GM12878 (cell line): ENCODE measurements at regions of chr2 and their contacts with region 1.

Region 1: GRCh38 chr2:143110758-143111428 is 18.3 kb upstream of the ARHGAP15 start:
- DNase-seq: peak; percentile 62
- ATAC-seq: peak; percentile 98
- H3K4me3 ChIP-seq: no peak overlapping the region
- H3K27ac ChIP-seq: no peak overlapping the region
- H3K4me1 ChIP-seq: no peaks in the 10 kb centered on the region
- H3K27me3 ChIP-seq: no peaks in the 10 kb centered on the region
- CTCF ChIP-seq: peak; percentile 55 to 79 (median 67)
- EP300 ChIP-seq: no peak
- POLR2A ChIP-seq: no peak
- RAD21 ChIP-seq: peak; percentile 97

Region 2: GRCh38 chr2:143034292-143035074 is 76.4 kb before region 1 on chr2:
- CTCF ChIA-PET with region 1: interaction called, 18 read pairs
- POLR2A ChIA-PET with region 1: no interaction called
- RAD21 ChIA-PET with region 1: interaction called, 4 read pairs
- SMC1A ChIA-PET with region 1: interaction called, 4 read pairs
- in situ Hi-C with region 1: no loop called
- intact Hi-C with region 1: loop called (anchors 2 kb)
- DNase-seq: peak; percentile 53
- ATAC-seq: peak; percentile 86
- H3K4me3 ChIP-seq: no peak overlapping the region
- H3K27ac ChIP-seq: no peak overlapping the region
- H3K4me1 ChIP-seq: no peaks in the 10 kb centered on the region
- H3K27me3 ChIP-seq: no peaks in the 10 kb centered on the region
- CTCF ChIP-seq: peak; percentile 78 to 98 (median 93); a peak in 5 of 6 replicates
- EP300 ChIP-seq: no peak
- POLR2A ChIP-seq: no peak
- RAD21 ChIP-seq: peak; percentile 78

Region 3: DNA sequence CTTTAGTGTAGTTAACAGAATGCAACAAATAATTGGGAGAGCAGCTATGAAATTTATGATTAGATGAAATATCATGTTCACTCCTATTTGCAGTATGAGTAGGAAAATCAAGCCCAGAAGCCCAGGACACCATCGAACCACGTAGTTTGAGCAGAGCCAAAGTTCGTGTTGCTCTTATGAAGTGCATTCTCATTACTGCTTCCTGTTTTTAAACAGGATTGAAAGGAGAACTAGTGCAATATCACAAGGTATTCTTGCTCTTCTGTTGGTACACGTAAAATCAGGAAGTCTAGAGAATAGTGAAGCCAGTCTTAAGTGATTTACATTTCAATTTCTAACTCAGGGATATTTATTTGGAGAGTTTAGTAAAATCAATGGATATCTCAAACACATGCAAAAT is 39.4 kb after region 1 on chr2:
- CTCF ChIA-PET with region 1: interaction called, 33 read pairs
- POLR2A ChIA-PET with region 1: no interaction called
- RAD21 ChIA-PET with region 1: interaction called, 15 read pairs
- SMC1A ChIA-PET with region 1: interaction called, 92 read pairs
- in situ Hi-C with region 1: no loop called
- intact Hi-C with region 1: no loop called
- DNase-seq: no peak
- ATAC-seq: peak; percentile 67
- H3K4me3 ChIP-seq: no peak overlapping the region
- H3K27ac ChIP-seq: peak overlapping the region; percentile 48
- H3K4me1 ChIP-seq: peaks cover 33% of the 10 kb centered on the region
- H3K27me3 ChIP-seq: no peaks in the 10 kb centered on the region
- CTCF ChIP-seq: no peak
- EP300 ChIP-seq: no peak
- POLR2A ChIP-seq: no peak
- RAD21 ChIP-seq: no peak

Region 4: DNA sequence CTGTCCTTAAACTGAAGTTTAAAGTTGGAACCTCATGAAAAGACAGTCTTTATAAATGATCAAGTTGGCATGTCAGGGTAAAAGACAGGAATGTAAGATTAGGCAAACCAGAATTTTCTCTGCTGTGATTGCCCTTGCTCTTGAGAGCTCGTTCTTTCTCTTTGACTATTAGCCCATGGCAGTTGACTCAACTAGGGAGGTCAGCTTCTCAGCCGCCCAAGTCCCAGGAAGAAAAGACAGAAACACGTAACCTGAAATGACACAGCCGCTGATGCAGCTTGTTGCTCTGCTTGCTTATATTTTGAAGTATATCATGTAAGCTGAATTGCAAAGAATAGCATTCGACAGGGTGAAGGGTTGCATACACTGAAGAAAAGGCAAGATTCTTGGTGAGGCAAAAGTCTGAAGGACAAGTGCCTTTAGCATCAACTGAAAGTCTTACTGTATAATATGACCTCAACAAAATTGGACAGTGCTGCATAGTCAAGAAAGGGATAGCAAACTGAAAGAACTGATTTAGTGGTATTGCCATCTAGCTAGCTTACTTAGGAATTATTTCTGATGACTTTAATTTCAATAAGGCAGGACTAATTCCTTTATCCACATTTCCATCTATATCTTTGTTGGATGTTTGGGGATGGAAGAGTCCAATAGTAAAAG is 73.0 kb after region 1 on chr2:
- CTCF ChIA-PET with region 1: interaction called, 8 read pairs
- POLR2A ChIA-PET with region 1: no interaction called
- RAD21 ChIA-PET with region 1: interaction called, 5 read pairs
- SMC1A ChIA-PET with region 1: interaction called, 10 read pairs
- in situ Hi-C with region 1: no loop called
- intact Hi-C with region 1: no loop called
- DNase-seq: peak; percentile 27
- ATAC-seq: peak; percentile 80
- H3K4me3 ChIP-seq: no peak overlapping the region
- H3K27ac ChIP-seq: peak overlapping the region; percentile 6; the same call in 1 of the 2 replicates
- H3K4me1 ChIP-seq: peaks cover 9% of the 10 kb centered on the region
- H3K27me3 ChIP-seq: no peaks in the 10 kb centered on the region
- CTCF ChIP-seq: no peak
- EP300 ChIP-seq: no peak
- POLR2A ChIP-seq: no peak
- RAD21 ChIP-seq: no peak

Region 5: GRCh38 chr2:143217512-143218115 is 106.7 kb after region 1 on chr2:
- CTCF ChIA-PET with region 1: interaction called, 228 read pairs
- POLR2A ChIA-PET with region 1: interaction called, 3 read pairs
- RAD21 ChIA-PET with region 1: interaction called, 87 read pairs
- SMC1A ChIA-PET with region 1: interaction called, 194 read pairs
- in situ Hi-C with region 1: no loop called
- intact Hi-C with region 1: loop called (anchors 1 kb)
- DNase-seq: no peak
- ATAC-seq: no peak
- H3K4me3 ChIP-seq: no peak overlapping the region
- H3K27ac ChIP-seq: no peak overlapping the region
- H3K4me1 ChIP-seq: no peaks in the 10 kb centered on the region
- H3K27me3 ChIP-seq: no peaks in the 10 kb centered on the region
- CTCF ChIP-seq: no peak
- EP300 ChIP-seq: no peak
- POLR2A ChIP-seq: no peak
- RAD21 ChIP-seq: no peak

Region 6: GRCh38 chr2:143254110-143254509 is 143.2 kb after region 1 on chr2:
- CTCF ChIA-PET with region 1: interaction called, 187 read pairs
- POLR2A ChIA-PET with region 1: no interaction called
- RAD21 ChIA-PET with region 1: interaction called, 115 read pairs
- SMC1A ChIA-PET with region 1: interaction called, 164 read pairs
- in situ Hi-C with region 1: loop called (anchors 5 kb)
- intact Hi-C with region 1: loop called (anchors 1 kb)
- DNase-seq: no peak
- ATAC-seq: no peak
- H3K4me3 ChIP-seq: no peak overlapping the region
- H3K27ac ChIP-seq: no peak overlapping the region
- H3K4me1 ChIP-seq: peaks cover 10% of the 10 kb centered on the region; the same call in 1 of the 2 replicates
- H3K27me3 ChIP-seq: no peaks in the 10 kb centered on the region
- CTCF ChIP-seq: no peak
- EP300 ChIP-seq: no peak
- POLR2A ChIP-seq: no peak
- RAD21 ChIP-seq: no peak